Activated naive CD4-positive, alpha-beta T cell treated with anti-CD3 and anti-CD28 coated beads for 36 hours (primary cell): ENCODE measurements at regions of chr1 and their contacts with region 1.

Region 1: GRCh38 chr1:1777950-1778662 is at the start of gene NADK:
- DNase-seq: peak; percentile 52
- H3K4me3 Mint-ChIP-seq: peak within 1 kb of the TSS; percentile 82
- H3K27ac Mint-ChIP-seq: peak within 1 kb of the TSS; percentile 81
- H3K4me1 Mint-ChIP-seq: peaks cover 62% of the 10 kb centered on the region
- H3K27me3 Mint-ChIP-seq: no peaks in the 10 kb centered on the region
- total RNA-seq, gene NADK: 42.1 to 43.6 TPM

Region 2: GRCh38 chr1:1815606-1816281 is 37.6 kb after region 1 on chr1:
- CTCF ChIA-PET with region 1: no interaction called
- intact Hi-C with region 1: no loop called
- DNase-seq: no peak
- H3K4me3 Mint-ChIP-seq: no peak overlapping the region
- H3K27ac Mint-ChIP-seq: no peak overlapping the region
- H3K4me1 Mint-ChIP-seq: no peaks in the 10 kb centered on the region
- H3K27me3 Mint-ChIP-seq: no peaks in the 10 kb centered on the region

Region 3: DNA sequence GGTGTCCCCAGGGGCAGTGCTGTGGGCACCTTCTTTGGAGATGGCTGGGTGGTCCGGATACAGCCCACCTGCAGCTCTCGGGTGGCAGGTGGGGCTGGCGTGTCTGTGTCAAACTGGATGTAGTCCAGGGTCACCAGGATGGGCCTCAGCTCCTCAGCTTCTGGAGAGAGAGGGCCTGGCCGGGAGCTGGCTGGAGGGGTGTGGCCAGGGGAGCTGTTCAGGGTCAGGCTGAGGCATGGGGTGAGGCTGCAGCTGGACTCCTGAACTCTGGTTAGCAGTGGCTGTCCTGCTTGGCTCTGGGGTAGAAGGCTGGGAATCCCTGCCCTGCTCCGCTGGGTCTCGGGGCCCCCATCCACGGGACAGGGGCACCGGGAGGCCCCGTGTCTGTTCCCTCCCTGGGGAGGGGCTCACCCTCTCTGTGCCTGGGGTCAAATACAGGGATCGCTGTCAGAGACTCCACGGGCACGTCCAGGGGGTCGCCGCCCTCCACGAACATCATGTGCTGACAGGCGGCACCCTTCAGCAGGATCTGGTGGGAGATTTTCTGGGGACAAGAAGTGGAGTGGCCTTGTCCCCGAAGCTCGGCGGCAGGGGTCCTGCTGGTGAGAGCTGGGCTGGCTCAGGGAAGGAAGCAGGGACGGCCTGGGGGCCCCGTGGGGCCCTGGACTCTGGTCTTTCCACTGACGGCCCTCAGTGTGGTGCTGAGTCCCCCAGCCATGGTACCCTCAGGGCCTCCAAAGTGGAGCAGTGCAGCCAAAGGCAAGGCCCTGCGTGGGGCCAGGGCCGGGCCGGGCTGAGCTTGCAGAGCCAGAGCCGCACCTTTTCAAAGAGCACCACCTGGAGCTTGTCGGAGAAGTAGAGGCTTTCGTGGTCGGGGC is 145.1 kb after region 1 on chr1:
- CTCF ChIA-PET with region 1: no interaction called
- intact Hi-C with region 1: no loop called
- DNase-seq: no peak
- H3K4me3 Mint-ChIP-seq: no peak overlapping the region
- H3K27ac Mint-ChIP-seq: no peak overlapping the region
- H3K4me1 Mint-ChIP-seq: peaks cover 3% of the 10 kb centered on the region
- H3K27me3 Mint-ChIP-seq: no peaks in the 10 kb centered on the region

Region 4: GRCh38 chr1:2049718-2050427 is 271.8 kb after region 1 on chr1 and contains the start of gene PRKCZ:
- CTCF ChIA-PET with region 1: interaction called, 4 read pairs
- intact Hi-C with region 1: loop called (anchors 10 kb)
- DNase-seq: peak; percentile 93
- H3K4me3 Mint-ChIP-seq: peak within 1 kb of the TSS; percentile 73
- H3K27ac Mint-ChIP-seq: no peak within 1 kb of the TSS
- H3K4me1 Mint-ChIP-seq: peaks cover 17% of the 10 kb centered on the region
- H3K27me3 Mint-ChIP-seq: peaks cover 12% of the 10 kb centered on the region
- total RNA-seq, gene PRKCZ: 6.8 to 7.0 TPM